ENCODE measurements at regions of chr1 and their contacts with region 1.

Region 1: DNA sequence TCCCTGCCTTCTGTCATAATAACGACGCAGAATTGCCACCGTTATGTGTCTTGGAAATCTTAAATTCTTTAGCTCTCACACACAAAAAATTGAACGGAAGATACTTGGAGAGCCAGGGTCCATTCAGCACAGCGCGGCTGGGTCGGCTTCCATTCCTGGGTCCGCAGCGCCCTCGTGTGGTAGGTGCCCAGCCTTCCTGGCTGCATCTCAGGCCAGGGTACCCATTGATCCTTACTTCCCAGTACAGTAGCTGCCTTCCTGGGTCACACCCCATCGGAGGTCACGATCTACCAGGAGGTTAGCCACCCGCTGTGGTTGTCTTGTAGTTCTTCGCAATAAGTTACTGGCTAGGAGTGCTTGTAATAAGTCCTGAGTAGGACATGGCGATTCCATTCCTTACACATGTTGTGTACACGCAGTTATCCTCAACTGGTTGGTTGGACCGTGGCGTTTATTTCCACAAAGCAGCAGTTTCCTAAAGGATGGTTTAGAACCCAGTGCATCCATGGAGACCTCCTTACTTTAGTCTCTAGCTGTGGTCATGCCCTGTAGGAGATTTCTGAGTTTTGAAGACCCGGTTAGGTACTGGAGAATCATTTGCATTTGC is 9.9 kb upstream of the MTARC1 start:
- DNase-seq: peak; percentile 72 to 91
- ATAC-seq: peak; percentile 99 to 100
- H3K4me3 ChIP-seq: no peak overlapping the region
- H3K27ac ChIP-seq: no peak overlapping the region
- H3K4me1 ChIP-seq: no peaks in the 10 kb centered on the region
- CTCF ChIP-seq: peak; percentile 93
- EP300 ChIP-seq: no peak
- POLR2A ChIP-seq: no peak
- RAD21 ChIP-seq: peak; percentile 94 to 96

Region 2: GRCh38 chr1:220680085-220680687 is 96.6 kb before region 1 on chr1:
- CTCF ChIA-PET with region 1: interaction called, 23 read pairs
- POLR2A ChIA-PET with region 1: no interaction called
- DNase-seq: peak; percentile 51 to 62
- ATAC-seq: peak; percentile 90 to 95
- H3K4me3 ChIP-seq: no peak overlapping the region
- H3K27ac ChIP-seq: no peak overlapping the region
- H3K4me1 ChIP-seq: no peaks in the 10 kb centered on the region; the same call in 2 of the 3 replicates
- CTCF ChIP-seq: peak; percentile 74
- EP300 ChIP-seq: no peak
- POLR2A ChIP-seq: no peak
- RAD21 ChIP-seq: peak; percentile 70 to 72

Region 3: GRCh38 chr1:220700556-220701179 is 76.2 kb before region 1 on chr1:
- CTCF ChIA-PET with region 1: interaction called, 20 read pairs
- POLR2A ChIA-PET with region 1: no interaction called
- DNase-seq: no peak
- ATAC-seq: no peak
- H3K4me3 ChIP-seq: no peak overlapping the region
- H3K27ac ChIP-seq: no peak overlapping the region
- H3K4me1 ChIP-seq: peaks cover 9% of the 10 kb centered on the region
- CTCF ChIP-seq: no peak
- EP300 ChIP-seq: no peak
- POLR2A ChIP-seq: no peak
- RAD21 ChIP-seq: no peak

Region 4: GRCh38 chr1:220748089-220748934 is 28.5 kb before region 1 on chr1 and contains the start of gene MTARC2:
- CTCF ChIA-PET with region 1: interaction called, 48 read pairs
- POLR2A ChIA-PET with region 1: no interaction called
- DNase-seq: peak; percentile 75 to 82
- ATAC-seq: peak; percentile 97 to 98
- H3K4me3 ChIP-seq: peak within 1 kb of the TSS; percentile 86
- H3K27ac ChIP-seq: peak within 1 kb of the TSS; percentile 88 to 92
- H3K4me1 ChIP-seq: peaks cover 22% of the 10 kb centered on the region; the same call in 2 of the 3 replicates
- CTCF ChIP-seq: no peak
- EP300 ChIP-seq: no peak
- POLR2A ChIP-seq: peak; percentile 95
- RAD21 ChIP-seq: 0 out of 5 replicates have a peak, but pooled peaks of 1 of the 2 experiments have one; percentile 12
- polyA plus RNA-seq, gene MTARC2: 17.7 and 18.4 TPM in 2 replicates

Region 5: GRCh38 chr1:220761688-220762427 is 15.0 kb before region 1 on chr1:
- CTCF ChIA-PET with region 1: interaction called, 52 read pairs
- POLR2A ChIA-PET with region 1: no interaction called
- DNase-seq: no peak
- ATAC-seq: no peak
- H3K4me3 ChIP-seq: no peak overlapping the region
- H3K27ac ChIP-seq: no peak overlapping the region
- H3K4me1 ChIP-seq: no peaks in the 10 kb centered on the region
- CTCF ChIP-seq: no peak
- EP300 ChIP-seq: no peak
- POLR2A ChIP-seq: no peak
- RAD21 ChIP-seq: no peak

Region 6: GRCh38 chr1:220841293-220841692 is 64.5 kb after region 1 on chr1:
- CTCF ChIA-PET with region 1: no interaction called
- POLR2A ChIA-PET with region 1: no interaction called
- DNase-seq: peak in 1 of 2 experiments; percentile 13
- ATAC-seq: no peak
- H3K4me3 ChIP-seq: no peak overlapping the region
- H3K27ac ChIP-seq: no peak overlapping the region
- H3K4me1 ChIP-seq: no peaks in the 10 kb centered on the region
- CTCF ChIP-seq: no peak
- EP300 ChIP-seq: no peak
- POLR2A ChIP-seq: no peak
- RAD21 ChIP-seq: no peak; a peak in 1 of 5 replicates

Region 7: GRCh38 chr1:221013691-221014660 is 237.2 kb after region 1 on chr1:
- CTCF ChIA-PET with region 1: no interaction called
- POLR2A ChIA-PET with region 1: no interaction called
- DNase-seq: no peak
- ATAC-seq: no peak
- H3K4me3 ChIP-seq: no peak overlapping the region
- H3K27ac ChIP-seq: no peak overlapping the region
- H3K4me1 ChIP-seq: no peaks in the 10 kb centered on the region
- CTCF ChIP-seq: no peak
- EP300 ChIP-seq: no peak
- POLR2A ChIP-seq: no peak
- RAD21 ChIP-seq: no peak